K562 (cell line): ENCODE measurements at regions of chr2 and their contacts with region 1.

Region 1: GRCh38 chr2:27059141-27059820 is 7.8 kb downstream of the AGBL5 start:
- DNase-seq: no peak
- ATAC-seq: no peak
- H3K4me3 ChIP-seq: no peak overlapping the region
- H3K27ac ChIP-seq: no peak overlapping the region
- H3K4me1 ChIP-seq: peaks cover 32 to 37% of the 10 kb centered on the region in 2 experiments
- H3K27me3 ChIP-seq: no peaks in the 10 kb centered on the region
- CTCF ChIP-seq: no peak
- EP300 ChIP-seq: no peak
- POLR2A ChIP-seq: no peak
- RAD21 ChIP-seq: no peak

Region 2: DNA sequence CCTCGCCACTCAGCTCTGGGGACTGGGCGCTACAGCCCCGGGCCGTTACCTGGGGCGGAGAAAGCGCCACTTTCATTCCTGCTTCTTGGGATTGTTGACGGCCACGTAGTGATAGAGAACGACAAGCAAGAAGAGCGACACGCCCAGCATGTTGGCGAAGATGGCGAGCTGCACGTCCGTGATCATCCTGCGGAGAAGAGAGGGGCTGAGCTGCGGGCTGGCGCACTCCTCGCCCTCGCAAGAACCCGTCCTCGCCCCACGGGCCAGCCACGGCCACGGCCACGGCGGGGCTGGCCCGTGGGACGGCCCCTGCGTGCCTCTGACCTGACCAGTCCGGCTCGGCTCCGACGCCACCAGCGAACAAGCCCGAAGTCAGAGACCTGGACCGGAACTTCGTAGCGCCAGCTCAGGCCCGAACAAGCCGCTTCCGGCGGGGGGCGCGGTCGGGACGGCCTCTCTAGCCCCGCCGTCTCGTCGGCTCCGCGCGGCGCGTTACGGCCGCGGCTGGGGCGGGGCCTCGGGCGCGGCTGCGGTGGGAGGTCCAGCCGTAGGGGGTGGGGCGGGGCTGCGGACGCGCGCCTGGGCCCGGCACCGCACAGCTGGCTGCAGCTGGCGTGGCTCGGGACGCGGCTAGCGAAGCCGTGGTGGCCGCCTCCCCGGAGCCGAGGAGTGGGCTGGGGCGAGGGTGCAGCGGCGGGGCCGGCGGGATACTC is 12.2 kb after region 1 on chr2 and contains the start of gene OST4:
- CTCF ChIA-PET with region 1: no interaction called
- POLR2A ChIA-PET with region 1: interaction called, 112 read pairs
- in situ Hi-C with region 1: no loop called
- intact Hi-C with region 1: no loop called
- DNase-seq: peak; percentile 95 to 96 (median 96)
- ATAC-seq: peak; percentile 93
- H3K4me3 ChIP-seq: peak within 1 kb of the TSS; percentile 82
- H3K27ac ChIP-seq: peak within 1 kb of the TSS; percentile 86
- H3K4me1 ChIP-seq: peaks cover 38 to 51% of the 10 kb centered on the region in 2 experiments
- H3K27me3 ChIP-seq: no peaks in the 10 kb centered on the region
- CTCF ChIP-seq: 0 out of 6 replicates have a peak, but pooled peaks of 1 of the 3 experiments have one; percentile 12
- EP300 ChIP-seq: 0 out of 2 replicates have a peak, but pooled peaks have one; percentile 3
- POLR2A ChIP-seq: peak; percentile 89
- RAD21 ChIP-seq: no peak
- polyA plus RNA-seq, gene OST4: 1,144 to 1,155 TPM